ENCODE measurements at regions of chr6 and their contacts with region 1.

Region 1: DNA sequence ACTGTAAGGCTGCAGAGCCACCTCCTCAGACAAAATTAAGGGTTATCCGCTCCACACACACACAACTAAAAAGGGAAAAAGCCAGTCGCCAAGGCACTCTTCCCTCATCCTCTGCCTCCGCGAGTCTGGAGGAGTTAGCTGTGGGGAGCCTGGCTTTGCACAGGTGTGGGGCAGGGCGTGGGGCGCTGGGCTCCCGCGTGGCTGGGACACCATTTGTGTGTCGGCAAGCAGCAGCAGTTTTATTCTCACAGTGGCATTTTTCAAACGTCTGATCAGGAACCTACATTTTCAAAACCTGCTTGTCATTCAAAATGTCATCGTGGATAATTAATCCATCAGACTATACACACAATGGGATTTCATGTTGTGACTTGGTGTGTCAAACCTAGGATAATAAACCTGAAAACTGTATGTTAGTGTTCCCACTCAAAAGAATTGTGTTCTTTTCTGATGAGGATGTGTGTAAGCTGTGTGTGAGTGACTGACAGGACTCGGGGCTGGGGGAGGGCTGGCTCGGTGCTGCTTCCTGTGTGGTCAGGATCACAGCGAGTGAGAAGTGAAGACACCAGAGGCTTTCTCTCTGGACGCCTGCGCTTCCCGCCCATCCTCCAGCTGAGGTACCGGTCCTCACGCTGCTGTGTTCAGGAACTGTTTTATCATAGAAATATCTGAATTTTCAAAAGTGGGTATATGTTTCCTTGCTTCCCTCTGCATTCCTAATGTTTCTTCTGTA is 83.1 kb downstream of the IRF4 start:
- DNase-seq: peak; percentile 96
- ATAC-seq: peak; percentile 98
- H3K4me3 Mint-ChIP-seq: peak overlapping the region; percentile 40
- H3K27ac Mint-ChIP-seq: peak overlapping the region; percentile 88
- H3K4me1 Mint-ChIP-seq: peaks cover 73% of the 10 kb centered on the region
- H3K27me3 Mint-ChIP-seq: no peaks in the 10 kb centered on the region
- CTCF ChIP-seq: no peak

Region 2: DNA sequence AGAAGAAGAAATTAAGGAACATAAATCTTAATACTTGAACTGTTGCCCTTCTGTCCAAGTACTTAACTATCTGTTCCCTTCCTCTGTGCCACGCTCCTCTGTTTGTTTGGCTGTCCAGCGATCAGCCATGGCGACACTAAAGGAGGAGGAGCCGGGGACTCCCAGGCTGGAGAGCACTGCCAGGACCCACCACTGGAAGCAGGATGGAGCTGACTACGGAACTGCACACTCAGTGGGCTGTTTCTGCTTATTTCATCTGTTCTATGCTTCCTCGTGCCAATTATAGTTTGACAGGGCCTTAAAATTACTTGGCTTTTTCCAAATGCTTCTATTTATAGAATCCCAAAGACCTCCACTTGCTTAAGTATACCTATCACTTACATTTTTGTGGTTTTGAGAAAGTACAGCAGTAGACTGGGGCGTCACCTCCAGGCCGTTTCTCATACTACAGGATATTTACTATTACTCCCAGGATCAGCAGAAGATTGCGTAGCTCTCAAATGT is 66.0 kb before region 1 on chr6:
- CTCF ChIA-PET with region 1: interaction called, 3 read pairs
- POLR2A ChIA-PET with region 1: interaction called, 853 read pairs
- intact Hi-C with region 1: no loop called
- DNase-seq: no peak
- ATAC-seq: no peak
- H3K4me3 Mint-ChIP-seq: no peak overlapping the region
- H3K27ac Mint-ChIP-seq: peak overlapping the region; percentile 77
- H3K4me1 Mint-ChIP-seq: peaks cover 64% of the 10 kb centered on the region
- H3K27me3 Mint-ChIP-seq: no peaks in the 10 kb centered on the region
- CTCF ChIP-seq: peak; percentile 41

Region 3: GRCh38 chr6:453152-453551 is 21.5 kb before region 1 on chr6:
- CTCF ChIA-PET with region 1: interaction called, 4 read pairs
- POLR2A ChIA-PET with region 1: interaction called, 16 read pairs
- intact Hi-C with region 1: no loop called
- DNase-seq: no peak
- ATAC-seq: no peak
- H3K4me3 Mint-ChIP-seq: no peak overlapping the region
- H3K27ac Mint-ChIP-seq: no peak overlapping the region
- H3K4me1 Mint-ChIP-seq: peaks cover 32% of the 10 kb centered on the region
- H3K27me3 Mint-ChIP-seq: no peaks in the 10 kb centered on the region
- CTCF ChIP-seq: no peak

Region 4: DNA sequence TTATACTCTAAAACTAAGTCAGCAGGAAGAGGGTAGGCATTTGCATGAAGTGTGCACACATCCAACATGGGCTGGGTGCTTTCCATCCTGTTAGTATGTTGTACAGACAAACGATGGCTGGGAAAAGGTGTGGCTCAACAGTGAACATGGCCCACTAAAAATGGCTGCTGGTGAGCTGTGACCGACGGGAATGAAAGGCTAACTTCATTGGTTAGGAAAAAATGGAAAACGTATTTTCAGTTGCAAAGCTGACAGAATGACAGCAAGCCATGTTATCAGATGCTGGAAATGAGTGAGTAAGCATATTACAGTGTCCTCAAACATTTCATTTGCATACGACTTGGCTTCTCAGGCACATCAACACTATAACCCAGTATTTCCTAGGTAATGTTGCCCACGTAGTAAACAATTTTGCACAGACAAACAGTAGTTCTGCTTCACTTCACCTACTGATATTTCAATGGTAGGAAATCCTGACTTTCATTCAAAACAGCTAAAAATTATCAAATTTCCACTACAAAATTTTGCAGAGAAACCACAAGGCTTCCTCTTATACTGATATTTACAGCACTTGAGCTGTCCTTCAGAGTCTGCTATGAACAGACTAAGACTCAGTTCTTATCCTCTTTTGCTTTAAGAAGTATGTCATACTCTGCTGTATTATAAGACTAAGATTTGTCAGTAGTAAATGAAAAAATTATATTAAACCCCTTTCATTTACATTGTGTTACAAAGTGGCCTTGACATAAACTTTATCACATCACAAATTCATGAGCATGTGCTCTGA is 15.8 kb after region 1 on chr6:
- CTCF ChIA-PET with region 1: interaction called, 16 read pairs
- POLR2A ChIA-PET with region 1: interaction called, 27 read pairs
- intact Hi-C with region 1: no loop called
- DNase-seq: peak; percentile 59
- ATAC-seq: peak; percentile 34
- H3K4me3 Mint-ChIP-seq: peak overlapping the region; percentile 67
- H3K27ac Mint-ChIP-seq: peak overlapping the region; percentile 99
- H3K4me1 Mint-ChIP-seq: peaks cover 93% of the 10 kb centered on the region
- H3K27me3 Mint-ChIP-seq: no peaks in the 10 kb centered on the region
- CTCF ChIP-seq: no peak

Region 5: GRCh38 chr6:617445-618100 is 143.0 kb after region 1 on chr6:
- CTCF ChIA-PET with region 1: no interaction called
- POLR2A ChIA-PET with region 1: no interaction called
- intact Hi-C with region 1: no loop called
- DNase-seq: peak; percentile 10
- ATAC-seq: no peak
- H3K4me3 Mint-ChIP-seq: no peak overlapping the region
- H3K27ac Mint-ChIP-seq: no peak overlapping the region
- H3K4me1 Mint-ChIP-seq: no peaks in the 10 kb centered on the region
- H3K27me3 Mint-ChIP-seq: no peaks in the 10 kb centered on the region
- CTCF ChIP-seq: no peak

Region 6: DNA sequence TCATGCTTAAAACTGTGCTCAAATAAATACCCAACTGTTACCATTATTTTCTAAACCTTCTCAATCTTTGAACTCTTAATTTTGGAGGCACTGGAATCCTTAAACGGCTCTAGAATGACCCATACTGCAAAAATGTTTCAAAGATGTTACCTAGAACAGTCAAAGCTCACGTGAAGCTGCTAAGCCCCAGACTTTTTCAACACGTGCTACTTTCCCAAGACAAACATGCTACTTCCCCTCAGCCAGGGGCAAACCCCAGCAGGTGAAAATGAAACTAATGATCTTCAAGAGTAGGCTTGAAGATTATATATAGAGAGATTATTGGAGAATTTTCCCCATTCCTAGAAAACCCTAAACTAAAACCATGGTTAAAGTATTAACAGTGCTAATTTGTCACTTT is 154.1 kb after region 1 on chr6:
- CTCF ChIA-PET with region 1: no interaction called
- POLR2A ChIA-PET with region 1: no interaction called
- intact Hi-C with region 1: no loop called
- DNase-seq: no peak
- ATAC-seq: no peak
- H3K4me3 Mint-ChIP-seq: no peak overlapping the region
- H3K27ac Mint-ChIP-seq: peak overlapping the region; percentile 27
- H3K4me1 Mint-ChIP-seq: peaks cover 16% of the 10 kb centered on the region
- H3K27me3 Mint-ChIP-seq: no peaks in the 10 kb centered on the region
- CTCF ChIP-seq: no peak

Region 7: DNA sequence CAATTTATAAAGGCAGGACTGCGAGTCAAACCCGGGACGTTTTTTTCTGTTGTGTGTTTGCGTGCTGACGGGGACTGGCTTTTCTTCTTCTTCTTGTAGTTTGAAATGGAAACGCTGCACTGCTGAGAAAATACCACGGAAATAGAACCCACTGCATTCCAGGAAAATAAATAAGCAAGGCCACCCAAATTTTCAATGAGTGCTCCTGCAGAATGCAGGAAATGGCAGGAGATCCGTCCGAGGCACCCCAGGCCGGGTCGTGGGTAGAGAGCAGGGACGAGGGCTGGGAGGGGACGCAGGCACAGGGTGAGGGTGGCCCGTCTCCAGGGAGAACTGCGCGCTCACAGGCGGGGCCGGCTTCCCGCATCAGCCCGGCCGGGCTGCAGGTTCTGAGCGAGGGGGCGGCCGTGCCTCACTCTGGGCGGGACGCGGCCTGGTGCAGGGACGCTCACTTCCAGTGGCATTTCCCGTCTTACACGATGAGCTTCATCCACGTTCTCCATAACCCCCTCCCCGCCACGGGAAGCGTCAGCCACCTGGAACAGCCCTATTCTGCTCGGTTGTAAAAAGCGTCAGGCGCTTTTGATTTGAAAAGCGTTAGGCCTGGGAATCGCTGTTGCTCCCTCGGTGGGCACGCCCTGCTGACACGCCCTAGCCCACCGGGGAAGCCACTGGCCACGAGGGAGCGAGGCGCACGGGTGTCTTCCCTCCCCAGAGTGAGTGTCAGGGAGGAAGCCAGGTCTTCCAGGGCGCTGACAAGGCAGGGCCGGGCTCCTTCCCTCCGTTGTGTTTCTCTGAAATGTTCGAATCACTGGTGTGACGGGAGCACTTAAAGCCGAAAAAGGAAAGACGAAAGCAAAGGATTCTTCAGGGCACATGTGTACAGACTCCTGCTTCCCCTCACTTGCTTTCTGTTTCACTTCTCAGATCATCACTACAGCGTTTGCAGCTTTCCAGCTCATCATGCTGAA is 236.3 kb after region 1 on chr6:
- CTCF ChIA-PET with region 1: no interaction called
- POLR2A ChIA-PET with region 1: no interaction called
- intact Hi-C with region 1: no loop called
- DNase-seq: peak; percentile 70
- ATAC-seq: peak; percentile 89
- H3K4me3 Mint-ChIP-seq: peak overlapping the region; percentile 88
- H3K27ac Mint-ChIP-seq: peak overlapping the region; percentile 98
- H3K4me1 Mint-ChIP-seq: peaks cover 24% of the 10 kb centered on the region
- H3K27me3 Mint-ChIP-seq: peaks cover 11% of the 10 kb centered on the region
- CTCF ChIP-seq: no peak

Region 8: GRCh38 chr6:776528-776931 is 301.9 kb after region 1 on chr6:
- CTCF ChIA-PET with region 1: no interaction called
- POLR2A ChIA-PET with region 1: no interaction called
- intact Hi-C with region 1: no loop called
- DNase-seq: no peak
- ATAC-seq: no peak
- H3K4me3 Mint-ChIP-seq: no peak overlapping the region
- H3K27ac Mint-ChIP-seq: no peak overlapping the region
- H3K4me1 Mint-ChIP-seq: no peaks in the 10 kb centered on the region
- H3K27me3 Mint-ChIP-seq: peaks cover 4% of the 10 kb centered on the region
- CTCF ChIP-seq: no peak

Measured in activated CD8-positive, alpha-beta T cell treated with anti-CD3 and anti-CD28 coated beads for 36 hours (primary cell).